Heart right ventricle (tissue), 16 donors: ENCODE measurements at regions of chr17 and their contacts with region 1.

Region 1: GRCh38 chr17:7351665-7352501 is at the start of gene KCTD11:
- DNase-seq: peak; percentile 91 to 93
- ATAC-seq: peak; percentile 70 to 84 (median 80)
- H3K4me3 ChIP-seq: peak within 1 kb of the TSS; percentile 73 to 91 (median 84)
- H3K27ac ChIP-seq: peak within 1 kb of the TSS; percentile 96 to 100 (median 99)
- H3K4me1 ChIP-seq: peaks cover 8 to 65% (median 46%) of the 10 kb centered on the region in 9 donors
- H3K27me3 ChIP-seq: no peaks in the 10 kb centered on the region
- CTCF ChIP-seq: peak in 6 of 9 donors; percentile 44 to 69 (median 58)
- total RNA-seq, gene KCTD11: 4.3 to 8.5 (median 5.3) TPM

Region 2: DNA sequence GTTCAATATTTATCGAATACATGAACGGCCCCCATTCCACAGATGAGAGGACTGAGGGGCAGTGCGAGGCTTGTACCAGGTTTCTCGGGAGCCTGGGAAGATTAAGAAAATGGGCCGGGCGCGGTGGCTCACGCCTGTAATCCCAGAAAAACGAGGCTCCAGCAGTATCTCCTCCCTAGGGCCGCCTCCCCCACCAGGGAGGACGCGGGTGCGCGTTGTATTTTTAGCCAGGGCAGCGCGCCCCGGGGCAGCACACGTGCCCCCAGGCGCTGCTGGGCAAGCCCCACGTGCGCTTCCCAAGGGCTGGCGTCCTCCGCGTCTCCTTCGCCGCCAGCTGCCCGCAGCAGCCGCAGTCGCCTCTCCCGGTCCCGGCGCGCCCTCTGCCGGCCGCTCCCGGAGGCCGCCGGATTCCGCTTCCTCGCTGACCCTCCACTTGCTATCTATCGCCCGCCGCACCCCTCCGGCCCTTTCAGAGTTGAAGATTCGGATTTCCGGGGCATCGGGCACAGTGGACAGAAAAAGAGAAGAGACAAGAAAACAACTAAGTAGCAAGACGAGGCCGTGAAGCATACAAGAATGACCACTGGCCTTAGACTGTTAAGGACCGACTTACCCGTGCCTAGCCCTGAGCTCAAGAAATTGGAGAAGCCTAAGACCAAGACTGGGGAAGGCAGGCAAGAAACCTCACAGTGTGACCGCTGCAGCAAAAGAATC is 55.5 kb before region 1 on chr17:
- intact Hi-C with region 1: loop called in 1 of 10 experiments (anchors 5 kb)
- DNase-seq: peak; percentile 81 to 88
- ATAC-seq: peak; percentile 71 to 93 (median 78)
- H3K4me3 ChIP-seq: peak overlapping the region in 7 of 10 donors; percentile 7 to 32 (median 14)
- H3K27ac ChIP-seq: peak overlapping the region; percentile 35 to 85 (median 80)
- H3K4me1 ChIP-seq: peaks cover 18 to 53% (median 49%) of the 10 kb centered on the region in 9 donors
- H3K27me3 ChIP-seq: peaks cover 0 to 57% (median 34%) of the 10 kb centered on the region in 7 donors
- CTCF ChIP-seq: peak; percentile 91 to 99 (median 96)

Region 3: DNA sequence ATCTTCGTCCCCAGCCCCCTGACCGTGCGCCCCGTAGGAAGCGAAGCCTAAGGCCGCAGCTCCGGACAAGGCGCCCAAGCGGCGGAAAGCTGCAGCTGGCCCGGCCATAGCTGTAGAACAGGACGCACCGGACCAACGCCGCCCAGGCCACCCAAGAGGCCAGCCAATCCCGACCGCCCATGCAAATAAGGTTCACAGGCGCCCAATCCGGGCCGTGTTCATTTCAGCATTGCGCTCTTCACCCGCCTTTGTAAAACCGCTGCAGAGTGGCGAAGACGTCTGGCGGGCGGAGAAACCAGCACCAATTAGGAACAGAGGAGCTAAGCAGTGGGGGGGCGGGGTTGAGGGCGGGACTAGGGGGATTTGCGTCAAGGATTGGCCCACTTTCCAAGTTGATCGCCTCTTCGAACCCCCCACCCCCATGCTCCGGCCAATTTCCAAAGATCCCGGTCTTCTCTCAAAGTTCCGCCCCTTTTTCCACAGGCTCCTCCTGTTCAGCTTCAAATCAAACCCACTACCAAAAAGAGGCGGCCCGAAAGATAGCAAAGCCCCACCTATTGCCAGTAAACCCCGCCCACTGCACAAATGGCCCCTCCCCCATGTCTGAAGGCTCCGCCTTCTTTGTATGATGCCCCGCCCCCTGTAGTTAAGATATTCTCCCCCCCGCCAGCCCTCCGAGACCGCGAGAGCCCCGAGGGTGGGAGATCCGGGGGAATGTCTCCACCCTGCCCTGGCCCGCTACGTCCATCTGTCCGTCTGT is 52.3 kb after region 1 on chr17 and contains the start of gene TMEM256:
- intact Hi-C with region 1: loop called in 1 of 10 experiments (anchors 2 kb)
- DNase-seq: peak; percentile 97 to 99
- ATAC-seq: peak; percentile 91 to 97 (median 96)
- H3K4me3 ChIP-seq: peak within 1 kb of the TSS; percentile 54 to 87 (median 68)
- H3K27ac ChIP-seq: peak within 1 kb of the TSS; percentile 80 to 96 (median 88)
- H3K4me1 ChIP-seq: peaks cover 13 to 28% (median 19%) of the 10 kb centered on the region in 9 donors
- H3K27me3 ChIP-seq: peaks cover 0 to 17% (median 0%) of the 10 kb centered on the region in 7 donors
- CTCF ChIP-seq: peak in 2 of 9 donors; percentile 8 to 13
- total RNA-seq, gene TMEM256: 61.8 to 83.2 (median 74.2) TPM

Region 4: DNA sequence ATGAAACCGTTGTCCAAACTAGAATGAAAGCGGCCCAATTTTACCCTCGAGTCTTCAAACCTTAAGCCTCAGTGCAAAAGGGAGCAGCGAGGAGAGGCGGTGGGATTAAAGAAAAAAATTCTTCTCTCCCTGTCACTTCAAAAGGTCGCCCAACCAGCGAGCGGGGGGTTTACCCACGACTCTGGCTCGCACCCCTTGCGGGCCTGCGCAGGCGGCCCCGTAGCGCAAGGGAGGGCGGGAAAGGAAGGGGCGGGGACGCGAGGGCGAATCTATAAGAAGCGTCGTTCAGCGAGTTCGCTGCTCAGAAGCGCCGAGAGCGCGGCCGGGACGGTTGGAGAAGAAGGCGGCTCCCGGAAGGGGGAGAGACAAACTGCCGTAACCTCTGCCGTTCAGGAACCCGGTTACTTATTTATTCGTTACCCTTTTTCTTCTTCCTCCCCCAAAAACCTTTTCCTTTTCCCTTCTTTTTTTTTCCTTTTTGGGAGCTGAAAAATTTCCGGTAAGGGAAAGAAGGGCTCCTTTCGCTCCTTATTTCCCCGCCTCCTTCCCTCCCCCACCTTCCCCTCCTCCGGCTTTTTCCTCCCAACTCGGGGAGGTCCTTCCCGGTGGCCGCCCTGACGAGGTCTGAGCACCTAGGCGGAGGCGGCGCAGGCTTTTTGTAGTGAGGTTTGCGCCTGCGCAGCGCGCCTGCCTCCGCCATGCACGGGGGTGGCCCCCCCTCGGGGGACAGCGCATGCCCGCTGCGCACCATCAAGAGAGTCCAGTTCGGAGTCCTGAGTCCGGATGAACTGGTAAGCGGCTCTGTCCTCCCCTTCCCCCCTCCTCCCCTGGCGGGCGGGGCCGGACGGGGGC is 132.4 kb after region 1 on chr17 and contains the start of gene POLR2A:
- intact Hi-C with region 1: loop called in 4 of 10 experiments (anchors 2 to 10 kb)
- DNase-seq: peak; percentile 98 to 99
- ATAC-seq: peak; percentile 84 to 93 (median 88)
- H3K4me3 ChIP-seq: peak within 1 kb of the TSS; percentile 55 to 87 (median 68)
- H3K27ac ChIP-seq: peak within 1 kb of the TSS; percentile 91 to 100 (median 100)
- H3K4me1 ChIP-seq: peaks cover 22 to 78% (median 60%) of the 10 kb centered on the region in 9 donors
- H3K27me3 ChIP-seq: no peaks in the 10 kb centered on the region
- CTCF ChIP-seq: no peak
- total RNA-seq, gene POLR2A: 40.5 to 61.7 (median 48.8) TPM

Region 5: GRCh38 chr17:7561028-7561575 is 209.2 kb after region 1 on chr17:
- intact Hi-C with region 1: loop called in 7 of 10 experiments (anchors 2 to 10 kb)
- DNase-seq: peak; percentile 91 to 92
- ATAC-seq: peak; percentile 66 to 86 (median 78)
- H3K4me3 ChIP-seq: peak overlapping the region; percentile 84 to 100 (median 96)
- H3K27ac ChIP-seq: peak overlapping the region; percentile 83 to 99 (median 94)
- H3K4me1 ChIP-seq: peaks cover 41 to 73% (median 69%) of the 10 kb centered on the region in 9 donors
- H3K27me3 ChIP-seq: no peaks in the 10 kb centered on the region
- CTCF ChIP-seq: peak; percentile 80 to 93 (median 87)